A673 (cell line): ENCODE measurements at regions of chr14 and their contacts with region 1.

Region 1: GRCh38 chr14:73633116-73634010 is 11.4 kb upstream of the DNAL1 start:
- DNase-seq: peak; percentile 82
- H3K4me3 ChIP-seq: peak overlapping the region; percentile 49
- H3K27ac ChIP-seq: no peak overlapping the region
- H3K4me1 ChIP-seq: peaks cover 10% of the 10 kb centered on the region
- H3K27me3 ChIP-seq: no peaks in the 10 kb centered on the region
- CTCF ChIP-seq: peak; percentile 88

Region 2: DNA sequence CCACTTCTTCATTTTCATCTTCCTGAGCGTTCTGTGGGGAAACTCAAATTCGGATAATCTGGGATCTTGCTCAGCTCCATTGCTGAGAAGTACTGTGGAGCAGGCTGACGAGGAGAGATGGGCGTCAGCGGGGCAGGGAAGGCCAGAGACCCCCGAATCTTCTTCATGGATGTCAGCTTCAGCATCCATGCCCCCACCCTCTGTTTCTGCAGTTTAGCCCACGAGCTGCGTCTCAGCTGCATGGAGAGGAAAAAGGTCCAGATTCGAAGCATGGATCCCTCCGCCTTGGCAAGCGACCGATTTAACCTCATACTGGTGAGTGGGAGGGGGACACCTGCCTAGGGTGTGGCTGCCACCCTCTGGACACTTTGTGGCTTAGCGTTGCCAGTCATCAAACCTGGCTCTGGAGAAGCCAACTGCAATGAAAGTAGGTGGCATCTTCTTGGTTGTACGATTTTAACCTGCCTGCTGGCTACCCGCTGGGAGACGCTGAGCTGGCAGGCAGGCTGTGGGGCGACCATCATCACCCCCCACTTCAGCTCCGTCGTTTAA is 690.5 kb before region 1 on chr14:
- CTCF ChIA-PET with region 1: no interaction called
- POLR2A ChIA-PET with region 1: no interaction called
- intact Hi-C with region 1: no loop called
- DNase-seq: no peak
- H3K4me3 ChIP-seq: no peak overlapping the region
- H3K27ac ChIP-seq: no peak overlapping the region
- H3K4me1 ChIP-seq: no peaks in the 10 kb centered on the region
- H3K27me3 ChIP-seq: no peaks in the 10 kb centered on the region
- CTCF ChIP-seq: 0 out of 2 replicates have a peak, but pooled peaks have one; percentile 19

Region 3: DNA sequence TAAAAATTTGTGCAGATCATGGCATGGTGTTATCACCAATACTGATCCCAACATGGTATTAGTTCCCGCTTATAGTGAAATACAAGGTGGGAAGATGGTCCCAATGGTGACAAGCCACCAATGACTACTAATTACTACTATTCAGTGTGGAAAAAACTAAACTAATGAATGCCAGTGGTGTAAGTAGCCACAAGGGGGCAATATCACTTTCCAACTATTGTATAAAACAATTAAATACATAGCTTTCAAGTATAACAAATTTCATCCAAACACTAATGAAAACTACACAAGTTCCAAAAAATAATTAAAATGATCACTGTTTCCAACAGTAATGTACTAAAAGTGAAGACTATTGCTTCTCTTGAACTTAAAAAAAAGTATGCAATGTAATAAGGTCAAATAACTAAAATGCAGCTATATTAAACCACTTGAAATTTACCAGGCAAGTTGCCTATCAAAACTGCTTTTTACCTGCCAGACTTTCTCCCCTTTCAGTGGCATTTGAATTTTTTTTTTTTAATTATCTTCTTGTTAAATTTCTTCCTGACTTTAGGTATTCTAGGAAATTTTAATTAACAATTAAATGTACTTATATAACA is 338.1 kb before region 1 on chr14:
- CTCF ChIA-PET with region 1: no interaction called
- POLR2A ChIA-PET with region 1: no interaction called
- intact Hi-C with region 1: loop called (anchors 5 kb)
- DNase-seq: peak; percentile 73
- H3K4me3 ChIP-seq: no peak overlapping the region
- H3K27ac ChIP-seq: no peak overlapping the region
- H3K4me1 ChIP-seq: no peaks in the 10 kb centered on the region
- H3K27me3 ChIP-seq: no peaks in the 10 kb centered on the region
- CTCF ChIP-seq: peak; percentile 88

Region 4: DNA sequence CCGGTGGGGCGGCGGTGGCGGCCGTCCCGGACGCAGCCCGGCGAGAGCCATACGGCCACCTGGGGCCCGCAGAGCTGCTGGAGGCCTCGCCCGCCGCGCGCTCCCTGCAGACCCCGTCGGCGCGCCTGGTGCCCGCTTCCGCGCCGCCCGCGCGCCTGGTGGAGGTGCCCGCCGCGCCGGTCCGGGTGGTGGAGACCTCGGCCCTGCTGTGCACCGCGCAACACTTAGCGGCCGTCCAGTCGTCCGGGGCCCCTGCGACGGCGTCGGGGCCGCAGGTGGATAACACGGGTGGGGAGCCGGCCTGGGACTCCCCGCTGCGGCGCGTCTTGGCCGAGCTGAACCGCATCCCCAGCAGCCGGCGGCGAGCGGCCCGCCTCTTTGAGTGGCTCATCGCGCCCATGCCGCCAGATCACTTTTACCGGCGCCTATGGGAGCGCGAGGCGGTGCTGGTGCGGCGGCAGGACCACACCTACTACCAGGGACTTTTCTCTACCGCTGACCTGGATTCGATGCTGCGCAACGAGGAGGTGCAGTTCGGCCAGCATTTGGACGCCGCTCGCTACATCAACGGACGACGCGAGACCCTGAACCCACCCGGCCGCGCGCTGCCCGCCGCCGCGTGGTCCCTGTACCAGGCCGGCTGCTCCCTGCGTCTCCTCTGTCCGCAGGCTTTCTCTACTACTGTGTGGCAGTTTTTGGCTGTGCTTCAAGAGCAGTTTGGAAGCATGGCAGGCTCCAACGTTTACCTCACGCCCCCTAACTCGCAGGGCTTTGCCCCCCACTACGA is 141.9 kb before region 1 on chr14:
- CTCF ChIA-PET with region 1: no interaction called
- POLR2A ChIA-PET with region 1: no interaction called
- intact Hi-C with region 1: loop called (anchors 5 kb)
- DNase-seq: peak; percentile 67
- H3K4me3 ChIP-seq: peak overlapping the region; percentile 87
- H3K27ac ChIP-seq: peak overlapping the region; percentile 89
- H3K4me1 ChIP-seq: peaks cover 13% of the 10 kb centered on the region
- H3K27me3 ChIP-seq: no peaks in the 10 kb centered on the region
- CTCF ChIP-seq: no peak

Region 5: GRCh38 chr14:73503648-73504047 is 129.7 kb before region 1 on chr14:
- CTCF ChIA-PET with region 1: interaction called, 3 read pairs
- POLR2A ChIA-PET with region 1: no interaction called
- intact Hi-C with region 1: loop called (anchors 1 kb)
- DNase-seq: no peak
- H3K4me3 ChIP-seq: no peak overlapping the region
- H3K27ac ChIP-seq: no peak overlapping the region
- H3K4me1 ChIP-seq: no peaks in the 10 kb centered on the region
- H3K27me3 ChIP-seq: no peaks in the 10 kb centered on the region
- CTCF ChIP-seq: no peak

Region 6: GRCh38 chr14:73591690-73592448 is 41.5 kb before region 1 on chr14 and contains the start of gene ACOT4:
- CTCF ChIA-PET with region 1: no interaction called
- POLR2A ChIA-PET with region 1: no interaction called
- intact Hi-C with region 1: no loop called
- DNase-seq: peak; percentile 29
- H3K4me3 ChIP-seq: peak within 1 kb of the TSS; percentile 60
- H3K27ac ChIP-seq: no peak within 1 kb of the TSS
- H3K4me1 ChIP-seq: no peaks in the 10 kb centered on the region
- H3K27me3 ChIP-seq: no peaks in the 10 kb centered on the region
- CTCF ChIP-seq: no peak
- total RNA-seq, gene ACOT4: 0.28 and 0.37 TPM in 2 replicates

Region 7: GRCh38 chr14:73862480-73862879 is 229.1 kb after region 1 on chr14:
- CTCF ChIA-PET with region 1: no interaction called
- POLR2A ChIA-PET with region 1: no interaction called
- intact Hi-C with region 1: loop called (anchors 10 kb)
- DNase-seq: no peak
- H3K4me3 ChIP-seq: no peak overlapping the region
- H3K27ac ChIP-seq: no peak overlapping the region
- H3K4me1 ChIP-seq: no peaks in the 10 kb centered on the region
- H3K27me3 ChIP-seq: no peaks in the 10 kb centered on the region
- CTCF ChIP-seq: no peak